WTC11 (cell line): ENCODE measurements at regions of chr4 and their contacts with region 1.

Region 1: GRCh38 chr4:61094854-61095598 is 105.1 kb upstream of the ADGRL3 start:
- DNase-seq: no peak
- ATAC-seq: no peak; the same call in 1 of the 2 replicates
- H3K4me3 Mint-ChIP-seq: no peak overlapping the region
- H3K27ac Mint-ChIP-seq: no peak overlapping the region
- H3K4me1 Mint-ChIP-seq: no peaks in the 10 kb centered on the region
- H3K27me3 Mint-ChIP-seq: no peaks in the 10 kb centered on the region
- CTCF ChIP-seq: no peak

Region 2: DNA sequence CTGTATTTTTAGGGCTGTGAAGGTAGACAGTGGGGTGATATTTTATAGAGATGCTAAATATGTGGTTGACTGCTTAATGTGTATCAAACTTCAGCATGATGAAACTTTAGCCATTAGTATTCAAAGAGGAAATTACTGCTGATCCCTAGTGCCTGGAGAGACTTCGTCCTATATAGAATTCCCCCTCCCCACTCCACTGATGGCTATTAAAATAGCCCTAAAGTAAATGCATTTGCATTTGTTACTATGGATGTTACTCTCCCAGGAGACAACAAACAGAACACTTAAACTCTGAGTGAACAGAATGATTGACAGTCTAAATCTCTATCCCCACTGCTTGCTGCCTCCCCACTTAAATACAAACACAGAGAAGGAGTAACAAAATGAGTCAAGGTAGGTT is 144.2 kb after region 1 on chr4:
- CTCF ChIA-PET with region 1: no interaction called
- POLR2A ChIA-PET with region 1: no interaction called
- DNase-seq: no peak
- ATAC-seq: no peak; the same call in 1 of the 2 replicates
- H3K4me3 Mint-ChIP-seq: no peak overlapping the region
- H3K27ac Mint-ChIP-seq: no peak overlapping the region; the same call in 1 of the 2 replicates
- H3K4me1 Mint-ChIP-seq: peaks cover 24% of the 10 kb centered on the region
- H3K27me3 Mint-ChIP-seq: no peaks in the 10 kb centered on the region
- CTCF ChIP-seq: no peak

Region 3: DNA sequence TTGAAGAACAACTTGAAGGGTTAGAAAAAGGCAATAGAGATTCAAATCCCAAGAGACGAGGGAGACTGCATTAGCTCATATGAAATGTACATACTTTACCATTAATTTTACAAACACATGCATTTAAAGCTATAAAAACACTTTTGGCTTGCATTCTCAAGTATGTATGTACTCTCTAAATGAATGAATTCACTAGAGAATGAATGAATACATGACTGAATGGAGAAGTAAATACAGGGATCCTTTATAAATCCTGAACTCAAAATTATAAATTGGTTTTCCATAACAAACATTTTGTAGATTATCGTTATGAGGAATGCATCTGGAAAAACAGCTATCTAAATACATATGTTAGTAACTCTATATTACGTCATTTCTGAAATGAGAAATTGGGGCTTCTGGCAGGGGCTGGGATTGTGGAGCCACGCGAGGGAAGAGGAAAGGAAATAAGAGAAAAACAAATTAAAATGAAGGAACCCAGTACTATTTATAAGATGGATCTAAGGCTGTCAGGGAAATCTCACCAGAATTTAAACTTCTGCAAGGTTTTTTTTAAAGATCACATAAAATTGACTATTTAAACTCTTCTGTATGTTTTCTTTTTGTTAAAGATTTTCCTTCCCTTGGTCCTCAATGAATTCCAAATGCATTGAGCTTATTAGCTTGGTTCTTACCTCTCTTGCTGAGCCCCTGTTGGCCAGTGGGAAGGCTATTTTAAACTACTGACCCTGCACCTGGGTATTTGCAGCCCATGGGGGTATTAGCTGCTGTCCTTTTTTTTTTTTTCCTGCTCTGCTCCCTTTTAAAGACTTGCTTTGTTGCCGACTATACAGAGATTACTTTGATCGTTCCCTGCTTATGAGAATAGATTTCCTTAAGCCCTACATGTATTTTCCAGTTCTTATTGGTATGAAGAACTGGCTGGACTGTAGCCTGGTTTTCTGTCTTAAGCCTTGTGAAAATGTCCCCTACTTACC is 312.9 kb after region 1 on chr4:
- CTCF ChIA-PET with region 1: no interaction called
- POLR2A ChIA-PET with region 1: interaction called, 10 read pairs
- DNase-seq: no peak
- ATAC-seq: peak; percentile 79
- H3K4me3 Mint-ChIP-seq: no peak overlapping the region
- H3K27ac Mint-ChIP-seq: peak overlapping the region; percentile 9
- H3K4me1 Mint-ChIP-seq: peaks cover 14% of the 10 kb centered on the region
- H3K27me3 Mint-ChIP-seq: no peaks in the 10 kb centered on the region
- CTCF ChIP-seq: no peak